PC-3 (cell line): ENCODE measurements at regions of chr9 and their contacts with region 1.

Region 1: DNA sequence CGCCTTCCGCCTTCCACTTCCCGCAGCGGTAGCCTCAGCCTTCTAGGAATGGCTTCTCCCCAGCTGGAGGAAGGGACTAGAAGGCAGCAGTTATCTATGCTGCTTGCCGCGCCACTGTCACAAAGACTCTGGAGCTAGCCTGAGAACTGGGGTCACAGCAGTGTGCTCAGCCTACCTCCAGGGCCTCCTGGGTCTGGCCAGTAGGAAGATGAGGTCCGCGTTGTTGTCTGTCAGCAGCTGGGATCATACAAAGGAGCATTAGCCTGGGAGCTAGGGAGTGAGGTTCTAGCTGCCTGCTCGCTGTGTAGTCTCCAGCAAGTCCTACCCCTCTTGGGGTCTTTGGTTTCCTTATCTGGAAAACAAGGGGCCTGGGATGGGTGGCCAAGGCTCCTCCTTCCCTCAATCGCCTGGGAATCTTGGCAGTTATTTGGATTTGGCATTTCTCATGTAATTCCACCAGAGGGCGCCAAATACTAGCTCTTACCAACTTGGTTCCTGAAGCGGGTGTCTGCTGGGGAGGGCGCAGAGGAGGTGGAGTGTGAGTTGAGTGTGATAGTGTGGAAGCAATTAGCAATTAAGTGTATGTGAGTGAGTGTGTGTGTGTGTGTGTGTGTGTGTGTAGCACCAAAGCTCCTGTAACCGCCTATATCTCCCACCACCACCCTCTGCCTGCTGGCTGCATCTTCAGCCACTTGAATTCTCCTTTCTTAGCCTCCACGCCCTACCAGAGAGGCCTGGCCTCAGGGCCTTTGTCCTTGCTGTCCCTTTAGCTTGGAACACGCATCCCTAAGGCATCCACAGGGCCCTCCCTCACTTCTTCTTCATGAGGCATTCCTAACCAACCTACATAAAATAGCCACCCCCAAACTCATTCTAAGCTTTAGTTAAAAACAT is 97.1 kb downstream of the ENTREP1 start:
- DNase-seq: peak; percentile 64
- ATAC-seq: peak; percentile 42
- H3K4me3 ChIP-seq: no peak overlapping the region
- H3K27ac ChIP-seq: no peak overlapping the region
- H3K4me1 ChIP-seq: no peaks in the 10 kb centered on the region
- H3K27me3 ChIP-seq: 0 out of 2 replicates have a peak, but pooled peaks cover 3% of the 10 kb centered on the region
- CTCF ChIP-seq: peak; percentile 71

Region 2: DNA sequence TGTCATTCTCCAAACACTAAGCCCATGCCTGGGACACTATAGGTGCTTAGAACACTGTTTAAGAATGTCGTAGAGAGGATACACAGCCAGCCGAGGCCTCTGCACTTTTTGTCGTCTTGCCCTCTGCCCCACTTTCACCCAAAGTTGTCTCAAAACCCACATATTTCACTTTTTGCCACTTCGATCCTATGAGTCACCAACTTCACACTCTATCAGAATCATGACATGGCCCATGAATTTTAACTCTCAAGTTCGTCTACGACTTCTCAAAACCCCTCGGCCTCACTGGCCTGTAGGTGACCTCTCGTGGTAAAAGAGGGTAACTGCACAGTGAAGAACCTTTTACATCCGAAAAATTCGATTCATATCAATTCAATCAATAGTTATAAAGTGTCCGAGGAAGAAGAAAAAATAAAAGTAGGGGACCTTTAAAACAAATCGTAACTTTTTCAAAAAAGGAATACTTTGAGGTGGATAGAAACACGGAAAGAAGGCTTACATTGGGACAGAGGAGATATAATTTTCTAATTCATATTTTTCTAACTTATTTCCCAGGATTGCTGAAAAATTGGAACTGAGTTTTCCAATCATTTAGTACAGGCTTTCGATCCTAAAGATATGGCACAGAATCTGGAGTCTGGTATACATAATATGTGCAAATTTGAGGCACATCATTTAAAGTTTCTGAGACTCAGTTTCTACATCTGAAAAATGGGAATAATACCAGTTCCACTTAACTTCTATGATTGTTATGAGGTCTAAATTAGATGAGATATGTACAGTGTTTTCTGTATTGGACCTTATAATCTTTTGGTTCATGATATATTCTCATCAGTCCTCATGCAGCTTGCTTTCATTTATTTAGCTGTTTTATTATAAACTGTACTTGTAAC is 127.4 kb after region 1 on chr9:
- CTCF ChIA-PET with region 1: no interaction called
- POLR2A ChIA-PET with region 1: no interaction called
- intact Hi-C with region 1: loop called (anchors 2 kb)
- DNase-seq: peak; percentile 59
- ATAC-seq: no peak
- H3K4me3 ChIP-seq: no peak overlapping the region
- H3K27ac ChIP-seq: no peak overlapping the region
- H3K4me1 ChIP-seq: no peaks in the 10 kb centered on the region
- H3K27me3 ChIP-seq: peaks cover 16% of the 10 kb centered on the region; the same call in 1 of the 2 replicates
- CTCF ChIP-seq: peak; percentile 84

Region 3: GRCh38 chr9:69877854-69878514 is 455.8 kb after region 1 on chr9:
- CTCF ChIA-PET with region 1: no interaction called
- POLR2A ChIA-PET with region 1: no interaction called
- intact Hi-C with region 1: loop called (anchors 2 kb)
- DNase-seq: peak; percentile 58
- ATAC-seq: peak; percentile 63
- H3K4me3 ChIP-seq: no peak overlapping the region
- H3K27ac ChIP-seq: no peak overlapping the region
- H3K4me1 ChIP-seq: no peaks in the 10 kb centered on the region
- H3K27me3 ChIP-seq: no peaks in the 10 kb centered on the region
- CTCF ChIP-seq: peak; percentile 71